CD4-positive, alpha-beta memory T cell (primary cell): ENCODE measurements at regions of chr6 and their contacts with region 1.

Region 1: GRCh38 chr6:30914076-30914853 is at the start of gene VARS2:
- DNase-seq: peak; percentile 86 to 92 (median 89)
- H3K4me3 ChIP-seq: peak within 1 kb of the TSS; percentile 70 to 94
- H3K4me3 Mint-ChIP-seq: peak within 1 kb of the TSS; percentile 89 to 96 (median 95)
- H3K27ac ChIP-seq: peak within 1 kb of the TSS; percentile 77
- H3K27ac Mint-ChIP-seq: peak within 1 kb of the TSS; percentile 83 to 98 (median 94)
- H3K4me1 ChIP-seq: peaks cover 21% of the 10 kb centered on the region
- H3K4me1 Mint-ChIP-seq: peaks cover 24 to 47% (median 34%) of the 10 kb centered on the region in 4 donors
- H3K27me3 ChIP-seq: no peaks in the 10 kb centered on the region
- H3K27me3 Mint-ChIP-seq: no peaks in the 10 kb centered on the region
- total RNA-seq, gene VARS2: 34.9 to 37.8 TPM

Region 2: DNA sequence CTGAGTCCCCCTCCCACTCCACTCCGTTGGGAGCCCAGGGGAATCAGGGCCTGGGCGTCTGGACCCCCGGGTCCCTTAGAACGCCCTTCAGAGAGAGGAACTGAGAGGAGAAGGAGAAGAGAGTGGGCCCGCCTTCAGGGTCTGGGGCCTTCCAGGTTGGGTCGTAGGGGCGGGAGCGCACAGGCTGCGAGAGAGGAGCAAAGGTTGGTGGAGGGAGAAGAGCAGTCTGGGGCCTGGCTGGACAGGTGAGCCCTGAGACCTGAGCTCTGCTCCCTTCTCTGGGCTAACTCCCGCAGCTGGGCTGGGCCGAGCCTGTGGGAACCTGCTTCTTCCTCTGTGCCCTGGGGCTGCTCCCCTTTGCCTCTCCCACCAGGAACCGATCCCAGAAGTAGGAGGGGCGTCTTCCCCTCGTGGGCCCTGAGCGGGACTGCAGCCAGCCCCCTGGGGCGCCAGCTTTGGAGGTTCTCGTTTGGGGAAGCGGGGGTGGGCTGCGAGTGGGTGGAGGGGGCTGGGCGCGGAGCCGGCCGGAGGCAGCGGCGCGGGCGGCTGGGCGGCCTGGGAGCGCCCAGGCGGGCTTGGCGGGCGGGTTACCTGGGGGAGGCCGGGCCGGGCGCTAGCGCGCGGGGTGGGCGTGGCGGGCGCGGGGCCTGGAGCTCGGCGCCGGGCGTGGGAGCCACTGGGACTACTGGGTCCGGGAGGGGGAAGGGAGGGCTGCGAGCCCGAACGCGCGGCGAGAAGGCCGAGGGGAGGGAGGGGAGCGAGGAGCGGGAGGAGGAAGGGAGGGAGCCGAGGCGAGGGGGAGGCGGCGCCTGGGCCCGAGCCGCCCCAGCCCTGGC is 30.4 kb before region 1 on chr6 and contains the start of gene DDR1:
- CTCF ChIA-PET with region 1: interaction called, 5 read pairs
- POLR2A ChIA-PET with region 1: interaction called, 13 read pairs
- intact Hi-C with region 1: no loop called
- DNase-seq: peak; percentile 30 to 66 (median 39)
- H3K4me3 ChIP-seq: peak within 1 kb of the TSS in 1 of 2 donors; percentile 52
- H3K4me3 Mint-ChIP-seq: peak within 1 kb of the TSS; percentile 77 to 87 (median 84)
- H3K27ac ChIP-seq: peak within 1 kb of the TSS; percentile 24
- H3K27ac Mint-ChIP-seq: peak within 1 kb of the TSS in 6 of 7 donors; percentile 38 to 89 (median 76)
- H3K4me1 ChIP-seq: peaks cover 31% of the 10 kb centered on the region
- H3K4me1 Mint-ChIP-seq: peaks cover 19 to 39% (median 26%) of the 10 kb centered on the region in 4 donors
- H3K27me3 ChIP-seq: no peaks in the 10 kb centered on the region
- H3K27me3 Mint-ChIP-seq: no peaks in the 10 kb centered on the region
- total RNA-seq, gene DDR1: 10.2 to 13.1 TPM

Region 3: DNA sequence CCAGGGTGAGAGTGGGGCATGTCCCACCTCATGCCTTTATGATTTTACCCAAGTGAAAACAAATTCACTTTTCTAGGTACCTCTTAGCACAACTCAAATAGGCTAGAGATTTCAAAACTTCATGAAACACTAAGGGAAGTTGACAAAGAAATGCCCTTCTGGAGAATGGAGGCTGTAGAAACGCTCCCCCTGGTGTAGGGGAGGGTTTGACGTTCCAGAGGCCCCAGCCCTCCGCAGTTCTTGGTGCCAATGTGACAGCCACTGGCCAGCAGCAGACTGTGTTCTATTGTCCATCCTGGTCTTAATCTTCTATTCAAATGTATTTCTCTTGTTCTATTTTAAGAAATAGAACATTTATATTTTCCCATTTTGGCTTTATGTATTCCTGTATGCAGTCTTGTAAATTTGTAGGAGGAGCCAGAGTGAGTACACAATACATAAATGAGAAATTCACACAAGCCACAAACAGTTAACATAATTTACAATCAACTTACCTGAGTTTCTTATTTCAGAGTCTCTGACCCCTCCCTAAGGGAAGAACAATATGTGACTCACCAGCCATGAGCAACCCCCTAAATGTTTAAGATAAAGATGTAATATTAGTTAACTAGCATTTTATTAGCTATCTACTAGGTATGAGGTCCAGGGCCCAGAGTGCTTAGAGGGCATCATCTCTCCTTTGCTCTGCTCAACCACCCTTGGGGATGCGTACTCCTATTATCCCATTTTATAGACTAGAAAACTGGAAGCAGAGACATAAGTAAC is 60.4 kb after region 1 on chr6:
- CTCF ChIA-PET with region 1: no interaction called
- POLR2A ChIA-PET with region 1: no interaction called
- intact Hi-C with region 1: no loop called
- DNase-seq: no peak
- H3K4me3 ChIP-seq: no peak overlapping the region
- H3K4me3 Mint-ChIP-seq: no peak overlapping the region
- H3K27ac ChIP-seq: no peak overlapping the region
- H3K27ac Mint-ChIP-seq: no peak overlapping the region
- H3K4me1 ChIP-seq: no peaks in the 10 kb centered on the region
- H3K4me1 Mint-ChIP-seq: no peaks in the 10 kb centered on the region
- H3K27me3 ChIP-seq: no peaks in the 10 kb centered on the region
- H3K27me3 Mint-ChIP-seq: peaks cover 14 to 25% of the 10 kb centered on the region in 2 donors

Region 4: GRCh38 chr6:31068669-31069340 is 154.5 kb after region 1 on chr6:
- CTCF ChIA-PET with region 1: interaction called, 9 read pairs
- POLR2A ChIA-PET with region 1: no interaction called
- intact Hi-C with region 1: loop called (anchors 1 kb)
- DNase-seq: peak; percentile 58 to 72 (median 66)
- H3K4me3 ChIP-seq: no peak overlapping the region
- H3K4me3 Mint-ChIP-seq: no peak overlapping the region
- H3K27ac ChIP-seq: no peak overlapping the region
- H3K27ac Mint-ChIP-seq: peak overlapping the region in 2 of 7 donors; percentile 12 to 17
- H3K4me1 ChIP-seq: no peaks in the 10 kb centered on the region
- H3K4me1 Mint-ChIP-seq: peaks cover 0 to 2% (median 0%) of the 10 kb centered on the region in 4 donors
- H3K27me3 ChIP-seq: no peaks in the 10 kb centered on the region
- H3K27me3 Mint-ChIP-seq: peaks cover 0 to 3% of the 10 kb centered on the region in 2 donors

Region 5: DNA sequence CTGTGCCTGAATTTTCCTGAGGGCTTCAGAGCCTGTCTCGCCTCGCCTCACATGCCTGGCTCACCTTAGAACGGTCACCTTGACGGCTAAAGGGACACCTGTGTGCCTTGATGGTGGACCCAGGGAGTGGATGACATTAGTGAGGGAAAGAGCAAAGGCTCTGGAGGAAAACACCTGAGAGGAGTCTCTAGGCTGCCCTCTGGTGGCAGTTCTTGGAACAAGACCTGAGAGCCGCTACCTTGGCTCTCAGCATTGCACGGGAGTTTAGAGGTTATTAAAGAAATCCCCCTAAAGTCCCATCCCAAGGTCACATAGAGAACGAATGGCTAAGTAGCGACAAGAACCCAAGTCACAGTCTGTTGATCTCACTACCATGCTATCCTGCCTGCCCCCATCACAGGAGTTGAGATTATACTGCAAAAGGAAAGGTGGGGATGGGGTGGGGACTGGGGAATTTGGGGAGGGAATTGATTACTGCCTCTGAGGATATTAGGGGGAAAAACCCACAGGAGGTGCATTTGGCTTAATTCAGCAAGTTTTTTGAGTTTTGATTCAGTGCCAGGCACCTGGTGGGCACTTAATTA is 213.9 kb after region 1 on chr6:
- CTCF ChIA-PET with region 1: interaction called, 4 read pairs
- POLR2A ChIA-PET with region 1: no interaction called
- intact Hi-C with region 1: loop called (anchors 1 kb)
- DNase-seq: peak; percentile 57 to 70 (median 62)
- H3K4me3 ChIP-seq: no peak overlapping the region
- H3K4me3 Mint-ChIP-seq: no peak overlapping the region
- H3K27ac ChIP-seq: no peak overlapping the region
- H3K27ac Mint-ChIP-seq: peak overlapping the region in 3 of 7 donors; percentile 7 to 52 (median 24)
- H3K4me1 ChIP-seq: peaks cover 3% of the 10 kb centered on the region
- H3K4me1 Mint-ChIP-seq: peaks cover 2 to 8% (median 7%) of the 10 kb centered on the region in 4 donors
- H3K27me3 ChIP-seq: no peaks in the 10 kb centered on the region
- H3K27me3 Mint-ChIP-seq: peaks cover 3 to 6% of the 10 kb centered on the region in 2 donors